CD4-positive, alpha-beta T cell (primary cell): ENCODE measurements at regions of chr11 and their contacts with region 1.

Region 1: GRCh38 chr11:121451986-121452608 is at the start of gene SORL1:
- DNase-seq: peak; percentile 64 to 89 (median 76)
- ATAC-seq: peak; percentile 57
- H3K4me3 ChIP-seq: peak within 1 kb of the TSS; percentile 90
- H3K4me3 Mint-ChIP-seq: peak within 1 kb of the TSS; percentile 95
- H3K27ac ChIP-seq: peak within 1 kb of the TSS; percentile 68 to 88
- H3K27ac Mint-ChIP-seq: peak within 1 kb of the TSS; percentile 93
- H3K4me1 ChIP-seq: peaks cover 81% of the 10 kb centered on the region
- H3K4me1 Mint-ChIP-seq: peaks cover 87% of the 10 kb centered on the region
- H3K27me3 ChIP-seq: no peaks in the 10 kb centered on the region
- H3K27me3 Mint-ChIP-seq: no peaks in the 10 kb centered on the region
- CTCF ChIP-seq: peak; percentile 53
- total RNA-seq, gene SORL1: 235 to 241 TPM

Region 2: GRCh38 chr11:121328967-121329679 is 123.0 kb before region 1 on chr11:
- CTCF ChIA-PET with region 1: no interaction called
- POLR2A ChIA-PET with region 1: interaction called, 42 read pairs
- intact Hi-C with region 1: loop called (anchors 5 kb)
- DNase-seq: peak in 3 of 14 experiments; percentile 19 to 46 (median 37)
- ATAC-seq: peak; percentile 39
- H3K4me3 ChIP-seq: no peak overlapping the region
- H3K4me3 Mint-ChIP-seq: no peak overlapping the region
- H3K27ac ChIP-seq: peak overlapping the region in 1 of 2 donors; percentile 50
- H3K27ac Mint-ChIP-seq: no peak overlapping the region
- H3K4me1 ChIP-seq: peaks cover 20% of the 10 kb centered on the region
- H3K4me1 Mint-ChIP-seq: peaks cover 18% of the 10 kb centered on the region
- H3K27me3 ChIP-seq: no peaks in the 10 kb centered on the region
- H3K27me3 Mint-ChIP-seq: no peaks in the 10 kb centered on the region
- CTCF ChIP-seq: no peak

Region 3: DNA sequence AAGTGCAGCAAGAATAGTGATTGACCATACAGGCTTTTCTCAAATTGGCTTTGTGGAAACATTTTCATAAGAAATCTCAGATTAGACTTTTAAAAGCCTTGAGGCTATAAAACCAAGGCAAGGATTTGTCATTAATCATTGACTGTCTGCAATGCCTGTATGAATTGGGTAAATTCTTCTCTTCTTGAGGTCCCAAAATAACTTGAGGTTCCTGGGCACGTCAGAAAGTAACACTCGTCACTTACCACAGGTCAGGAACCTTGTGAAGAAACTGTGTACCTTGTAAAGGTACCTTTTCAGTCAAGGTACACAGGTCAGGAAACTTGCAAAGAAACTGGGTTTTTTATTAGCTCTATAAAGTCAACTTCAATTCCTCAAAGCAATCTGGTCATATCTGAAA is 43.3 kb before region 1 on chr11:
- CTCF ChIA-PET with region 1: no interaction called
- POLR2A ChIA-PET with region 1: interaction called, 12 read pairs
- intact Hi-C with region 1: no loop called
- DNase-seq: no peak
- ATAC-seq: no peak
- H3K4me3 ChIP-seq: no peak overlapping the region
- H3K4me3 Mint-ChIP-seq: no peak overlapping the region
- H3K27ac ChIP-seq: no peak overlapping the region
- H3K27ac Mint-ChIP-seq: no peak overlapping the region
- H3K4me1 ChIP-seq: no peaks in the 10 kb centered on the region
- H3K4me1 Mint-ChIP-seq: peaks cover 6% of the 10 kb centered on the region
- H3K27me3 ChIP-seq: no peaks in the 10 kb centered on the region
- H3K27me3 Mint-ChIP-seq: no peaks in the 10 kb centered on the region
- CTCF ChIP-seq: no peak

Region 4: DNA sequence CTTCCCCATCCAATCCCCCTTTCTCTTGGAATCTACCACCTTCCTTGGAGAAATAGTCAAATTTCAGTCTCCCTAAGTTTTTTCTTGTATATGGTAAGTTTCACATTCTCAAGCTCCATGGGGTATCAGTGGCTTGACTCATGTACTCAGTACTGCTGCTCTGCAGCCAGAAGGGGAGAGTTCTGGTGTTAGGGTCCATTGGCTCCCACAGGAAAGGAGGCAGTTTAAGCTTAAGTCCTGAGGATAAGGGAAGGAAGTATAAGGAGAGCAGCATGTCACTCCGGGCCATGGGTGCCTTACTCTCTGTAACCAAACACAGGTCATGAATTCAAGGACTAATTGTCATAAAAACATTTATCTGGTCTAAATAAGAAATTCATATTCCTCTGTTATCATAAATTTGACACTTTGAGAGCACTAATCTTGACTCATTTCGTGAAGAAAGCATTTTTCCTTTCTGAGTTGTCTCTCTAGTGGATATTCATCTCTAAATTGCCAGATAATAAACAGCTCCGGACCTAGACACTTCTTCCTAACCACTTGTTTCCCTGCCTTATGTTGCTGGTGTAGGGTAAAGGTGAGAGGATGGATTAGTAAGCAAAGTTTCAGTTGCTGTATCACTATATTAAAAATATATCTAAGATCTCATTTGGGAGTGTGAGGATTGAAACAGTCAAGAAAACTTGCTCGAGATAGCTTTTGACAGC is 20.1 kb before region 1 on chr11:
- CTCF ChIA-PET with region 1: interaction called, 4 read pairs
- POLR2A ChIA-PET with region 1: interaction called, 69 read pairs
- intact Hi-C with region 1: no loop called
- DNase-seq: no peak
- ATAC-seq: no peak
- H3K4me3 ChIP-seq: no peak overlapping the region
- H3K4me3 Mint-ChIP-seq: no peak overlapping the region
- H3K27ac ChIP-seq: no peak overlapping the region
- H3K27ac Mint-ChIP-seq: no peak overlapping the region
- H3K4me1 ChIP-seq: peaks cover 25% of the 10 kb centered on the region
- H3K4me1 Mint-ChIP-seq: peaks cover 41% of the 10 kb centered on the region
- H3K27me3 ChIP-seq: no peaks in the 10 kb centered on the region
- H3K27me3 Mint-ChIP-seq: no peaks in the 10 kb centered on the region
- CTCF ChIP-seq: no peak

Region 5: GRCh38 chr11:121482231-121483129 is 30.4 kb after region 1 on chr11:
- CTCF ChIA-PET with region 1: interaction called, 13 read pairs
- POLR2A ChIA-PET with region 1: interaction called, 20 read pairs
- intact Hi-C with region 1: loop called (anchors 1 to 5 kb)
- DNase-seq: peak; percentile 29 to 89 (median 60)
- ATAC-seq: peak; percentile 80
- H3K4me3 ChIP-seq: peak overlapping the region; percentile 27
- H3K4me3 Mint-ChIP-seq: peak overlapping the region; percentile 75
- H3K27ac ChIP-seq: peak overlapping the region; percentile 69 to 71
- H3K27ac Mint-ChIP-seq: peak overlapping the region; percentile 89
- H3K4me1 ChIP-seq: peaks cover 65% of the 10 kb centered on the region
- H3K4me1 Mint-ChIP-seq: peaks cover 71% of the 10 kb centered on the region
- H3K27me3 ChIP-seq: no peaks in the 10 kb centered on the region
- H3K27me3 Mint-ChIP-seq: no peaks in the 10 kb centered on the region
- CTCF ChIP-seq: no peak

Region 6: DNA sequence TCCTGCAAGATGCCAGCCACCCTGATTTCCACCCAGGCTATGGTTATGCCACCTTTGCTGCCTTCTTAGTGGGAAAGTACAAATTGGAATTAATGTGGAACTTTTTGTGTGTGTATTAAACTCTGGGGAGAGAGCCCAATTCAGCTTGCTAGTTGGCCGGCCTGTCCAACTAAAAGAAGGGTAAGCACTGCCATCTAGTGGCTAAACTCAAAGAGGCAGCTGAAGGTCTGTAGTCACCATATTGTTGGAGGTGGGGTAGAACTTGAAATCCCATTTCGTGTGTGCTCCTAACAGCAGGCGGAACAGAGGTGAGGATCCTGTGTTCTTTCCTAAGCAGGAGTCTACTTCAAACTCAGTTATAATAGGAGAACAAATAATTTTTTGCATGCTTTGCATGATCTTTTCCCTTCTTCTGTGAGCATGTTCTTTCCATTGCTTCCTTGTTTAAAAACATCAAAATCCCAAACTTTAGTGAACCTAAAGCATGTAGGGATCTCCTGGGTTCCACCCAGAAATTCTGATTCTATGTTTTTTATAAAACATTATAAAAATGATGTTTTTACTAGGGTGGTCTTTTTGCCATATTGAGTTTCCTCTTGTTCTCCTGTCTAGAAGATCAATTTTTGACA is 139.4 kb after region 1 on chr11:
- CTCF ChIA-PET with region 1: no interaction called
- POLR2A ChIA-PET with region 1: interaction called, 5 read pairs
- intact Hi-C with region 1: loop called (anchors 5 to 10 kb)
- DNase-seq: peak; percentile 42 to 88 (median 62)
- ATAC-seq: peak; percentile 91
- H3K4me3 ChIP-seq: no peak overlapping the region
- H3K4me3 Mint-ChIP-seq: no peak overlapping the region
- H3K27ac ChIP-seq: no peak overlapping the region
- H3K27ac Mint-ChIP-seq: peak overlapping the region; percentile 71
- H3K4me1 ChIP-seq: peaks cover 5% of the 10 kb centered on the region
- H3K4me1 Mint-ChIP-seq: peaks cover 10% of the 10 kb centered on the region
- H3K27me3 ChIP-seq: no peaks in the 10 kb centered on the region
- H3K27me3 Mint-ChIP-seq: no peaks in the 10 kb centered on the region
- CTCF ChIP-seq: peak; percentile 84

Region 7: GRCh38 chr11:121909596-121909995 is 457.5 kb after region 1 on chr11:
- CTCF ChIA-PET with region 1: no interaction called
- POLR2A ChIA-PET with region 1: no interaction called
- intact Hi-C with region 1: no loop called
- DNase-seq: no peak
- ATAC-seq: no peak
- H3K4me3 ChIP-seq: no peak overlapping the region
- H3K4me3 Mint-ChIP-seq: no peak overlapping the region
- H3K27ac ChIP-seq: no peak overlapping the region
- H3K27ac Mint-ChIP-seq: no peak overlapping the region
- H3K4me1 ChIP-seq: no peaks in the 10 kb centered on the region
- H3K4me1 Mint-ChIP-seq: no peaks in the 10 kb centered on the region
- H3K27me3 ChIP-seq: no peaks in the 10 kb centered on the region
- H3K27me3 Mint-ChIP-seq: peaks cover 37% of the 10 kb centered on the region
- CTCF ChIP-seq: no peak

Region 8: GRCh38 chr11:122671400-122671891 is 1219.3 kb after region 1 on chr11:
- CTCF ChIA-PET with region 1: no interaction called
- POLR2A ChIA-PET with region 1: no interaction called
- intact Hi-C with region 1: no loop called
- DNase-seq: no peak
- ATAC-seq: no peak
- H3K4me3 ChIP-seq: no peak overlapping the region
- H3K4me3 Mint-ChIP-seq: no peak overlapping the region
- H3K27ac ChIP-seq: no peak overlapping the region
- H3K27ac Mint-ChIP-seq: peak overlapping the region; percentile 56
- H3K4me1 ChIP-seq: peaks cover 99% of the 10 kb centered on the region
- H3K4me1 Mint-ChIP-seq: peaks cover 81% of the 10 kb centered on the region
- H3K27me3 ChIP-seq: no peaks in the 10 kb centered on the region
- H3K27me3 Mint-ChIP-seq: no peaks in the 10 kb centered on the region
- CTCF ChIP-seq: no peak